Activated naive CD4-positive, alpha-beta T cell treated with anti-CD3 and anti-CD28 coated beads, Interleukin-2, amount 10 ng/mL, durations not matched to agents 7 days and 5 days (primary cell): ENCODE measurements at regions of chr5 and their contacts with region 1.

Region 1: GRCh38 chr5:140145818-140146522 is 20.2 kb downstream of the IGIP start:
- DNase-seq: peak; percentile 63
- H3K4me3 Mint-ChIP-seq: no peak overlapping the region
- H3K27ac Mint-ChIP-seq: no peak overlapping the region
- H3K4me1 Mint-ChIP-seq: peaks cover 15% of the 10 kb centered on the region
- H3K27me3 Mint-ChIP-seq: peaks cover 71% of the 10 kb centered on the region

Region 2: DNA sequence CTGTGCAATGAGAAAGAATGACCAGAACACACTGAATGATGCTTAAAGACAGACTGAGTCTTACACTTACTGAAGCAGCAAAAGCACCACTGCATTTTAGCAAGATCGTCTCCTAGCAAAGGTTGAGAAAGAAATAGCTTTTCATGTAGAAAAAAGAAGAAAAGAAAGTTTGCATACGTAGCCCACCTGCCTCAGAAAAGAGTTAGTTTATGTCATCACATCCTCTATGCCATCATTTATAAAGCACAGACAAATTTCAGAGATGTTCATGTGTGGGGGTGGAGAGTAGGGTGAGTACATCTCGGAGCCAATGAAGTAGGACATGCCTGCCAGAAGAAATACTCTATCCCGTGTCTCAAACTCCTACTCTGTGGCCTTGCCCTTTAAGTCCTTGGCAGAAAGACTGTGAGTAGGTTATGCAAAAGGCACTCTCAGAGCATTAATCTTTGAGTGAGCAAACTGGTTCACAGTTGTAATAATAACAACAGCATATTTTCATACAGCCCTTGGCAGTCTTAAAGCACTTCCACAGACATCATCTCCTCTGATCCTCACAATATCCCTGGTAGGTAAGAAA is 125.3 kb before region 1 on chr5:
- CTCF ChIA-PET with region 1: no interaction called
- DNase-seq: no peak
- H3K4me3 Mint-ChIP-seq: no peak overlapping the region
- H3K27ac Mint-ChIP-seq: no peak overlapping the region
- H3K4me1 Mint-ChIP-seq: no peaks in the 10 kb centered on the region
- H3K27me3 Mint-ChIP-seq: peaks cover 22% of the 10 kb centered on the region

Region 3: DNA sequence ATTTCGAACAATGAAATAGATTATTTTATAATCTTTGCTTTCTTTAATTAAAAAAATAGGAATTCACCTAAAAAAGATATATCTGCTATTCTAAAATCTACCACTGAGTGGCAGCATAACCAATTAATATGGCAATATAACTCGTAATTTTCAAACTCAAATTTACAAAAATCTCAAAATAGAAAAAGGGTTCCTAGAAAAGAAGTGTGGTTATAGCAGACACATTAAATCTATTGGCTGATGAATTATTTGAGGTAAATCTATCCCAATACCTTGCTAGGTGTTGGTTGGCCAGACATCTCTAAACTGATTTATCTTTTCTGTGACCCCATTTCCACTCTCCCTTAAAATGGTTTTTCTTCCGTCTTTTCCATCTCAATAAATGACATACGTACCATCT is 72.7 kb before region 1 on chr5:
- CTCF ChIA-PET with region 1: interaction called, 120 read pairs
- DNase-seq: no peak
- H3K4me3 Mint-ChIP-seq: no peak overlapping the region
- H3K27ac Mint-ChIP-seq: no peak overlapping the region
- H3K4me1 Mint-ChIP-seq: no peaks in the 10 kb centered on the region
- H3K27me3 Mint-ChIP-seq: peaks cover 33% of the 10 kb centered on the region

Region 4: DNA sequence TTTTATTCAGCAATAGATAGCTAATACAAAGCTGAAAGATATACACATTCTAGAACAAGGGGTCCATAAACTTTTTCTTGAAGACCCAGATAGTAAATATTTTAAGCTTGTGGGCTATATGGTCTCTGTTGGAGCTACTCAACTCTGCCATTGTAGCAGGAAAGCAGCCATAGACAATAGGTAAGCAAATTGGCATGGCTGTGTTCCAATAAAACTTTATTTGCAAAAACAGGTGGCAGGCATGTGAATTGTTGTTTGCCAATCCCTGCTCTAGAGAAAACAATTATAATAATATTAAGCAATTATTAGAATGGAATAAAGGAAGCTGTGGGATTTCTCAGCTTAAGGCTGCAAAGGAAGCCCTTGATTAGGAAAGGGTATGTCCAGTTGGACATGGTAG is 64.9 kb before region 1 on chr5:
- CTCF ChIA-PET with region 1: interaction called, 120 read pairs
- DNase-seq: no peak
- H3K4me3 Mint-ChIP-seq: no peak overlapping the region
- H3K27ac Mint-ChIP-seq: no peak overlapping the region
- H3K4me1 Mint-ChIP-seq: no peaks in the 10 kb centered on the region
- H3K27me3 Mint-ChIP-seq: peaks cover 43% of the 10 kb centered on the region

Region 5: DNA sequence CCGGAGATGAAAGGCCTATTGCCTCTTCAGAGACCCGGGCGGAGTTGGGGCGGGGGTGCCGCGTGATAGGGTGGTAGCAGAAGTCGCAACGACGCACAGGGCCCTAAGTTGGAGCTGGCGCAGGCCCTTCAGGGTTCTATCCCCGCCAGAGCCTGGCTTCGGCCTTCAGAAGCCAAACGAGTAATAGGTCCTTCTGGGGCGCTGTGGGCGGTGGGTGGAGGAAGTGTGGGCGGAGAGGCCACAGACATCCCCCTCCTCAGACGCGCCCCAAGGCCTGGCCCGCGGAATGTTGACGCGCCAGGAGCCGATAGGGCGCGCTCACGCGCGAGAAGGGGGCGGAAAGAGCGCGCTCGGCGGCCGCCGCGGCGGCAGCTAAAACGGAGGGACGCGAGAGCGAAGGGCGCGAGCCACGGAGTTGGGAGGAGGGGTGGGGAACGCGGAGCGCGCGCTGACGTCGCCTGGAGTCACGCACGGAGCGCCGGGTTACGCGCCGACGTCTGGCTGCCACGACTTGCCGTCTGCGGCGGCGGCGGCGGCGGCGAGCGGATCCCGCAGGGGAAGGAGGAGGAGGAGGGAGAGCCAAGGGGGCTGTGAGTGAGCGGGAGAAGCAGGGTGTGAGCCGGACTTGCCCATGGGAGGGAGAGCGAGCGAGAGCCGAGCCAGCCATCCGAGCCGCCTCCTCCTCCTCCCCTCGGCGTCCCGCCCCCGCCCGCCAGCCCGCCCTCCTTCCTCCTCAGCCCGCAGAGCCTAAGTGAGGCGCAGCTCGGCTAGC is 38.5 kb before region 1 on chr5:
- CTCF ChIA-PET with region 1: interaction called, 62 read pairs
- DNase-seq: peak; percentile 96
- H3K4me3 Mint-ChIP-seq: peak overlapping the region; percentile 97
- H3K27ac Mint-ChIP-seq: peak overlapping the region; percentile 98
- H3K4me1 Mint-ChIP-seq: peaks cover 46% of the 10 kb centered on the region
- H3K27me3 Mint-ChIP-seq: peaks cover 42% of the 10 kb centered on the region

Region 6: GRCh38 chr5:140113699-140114263 is 32.2 kb before region 1 on chr5 and contains the start of gene PURA:
- CTCF ChIA-PET with region 1: interaction called, 62 read pairs
- DNase-seq: peak; percentile 99
- H3K4me3 Mint-ChIP-seq: peak within 1 kb of the TSS; percentile 95
- H3K27ac Mint-ChIP-seq: peak within 1 kb of the TSS; percentile 98
- H3K4me1 Mint-ChIP-seq: peaks cover 74% of the 10 kb centered on the region
- H3K27me3 Mint-ChIP-seq: peaks cover 39% of the 10 kb centered on the region

Region 7: DNA sequence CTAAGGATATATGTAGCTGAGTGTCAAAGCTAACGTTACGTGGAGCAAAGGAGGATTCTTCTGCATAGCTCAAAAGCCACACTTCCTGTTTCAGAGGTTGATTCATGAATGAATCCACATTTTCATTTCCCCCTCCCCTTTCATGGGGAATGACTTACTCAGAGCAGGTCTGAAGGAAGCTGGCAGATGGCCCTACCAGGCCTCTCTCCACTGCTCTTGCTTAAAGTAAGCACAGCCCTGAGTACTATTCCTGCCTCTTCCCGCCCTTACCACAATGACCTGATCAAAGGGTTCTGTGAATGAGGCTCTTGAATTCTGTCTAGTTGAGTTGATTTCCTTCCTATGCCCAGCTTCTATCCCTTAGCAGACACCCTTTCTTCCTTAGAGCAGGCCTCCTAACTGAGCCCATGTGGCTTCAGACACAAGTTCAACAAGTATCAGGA is 14.0 kb before region 1 on chr5:
- CTCF ChIA-PET with region 1: interaction called, 29 read pairs
- DNase-seq: no peak
- H3K4me3 Mint-ChIP-seq: no peak overlapping the region
- H3K27ac Mint-ChIP-seq: peak overlapping the region; percentile 53
- H3K4me1 Mint-ChIP-seq: peaks cover 41% of the 10 kb centered on the region
- H3K27me3 Mint-ChIP-seq: peaks cover 6% of the 10 kb centered on the region

Region 8: GRCh38 chr5:140157032-140157803 is 11.2 kb after region 1 on chr5:
- CTCF ChIA-PET with region 1: interaction called, 27 read pairs
- DNase-seq: peak; percentile 90
- H3K4me3 Mint-ChIP-seq: no peak overlapping the region
- H3K27ac Mint-ChIP-seq: no peak overlapping the region
- H3K4me1 Mint-ChIP-seq: peaks cover 10% of the 10 kb centered on the region
- H3K27me3 Mint-ChIP-seq: peaks cover 7% of the 10 kb centered on the region

Region 9: DNA sequence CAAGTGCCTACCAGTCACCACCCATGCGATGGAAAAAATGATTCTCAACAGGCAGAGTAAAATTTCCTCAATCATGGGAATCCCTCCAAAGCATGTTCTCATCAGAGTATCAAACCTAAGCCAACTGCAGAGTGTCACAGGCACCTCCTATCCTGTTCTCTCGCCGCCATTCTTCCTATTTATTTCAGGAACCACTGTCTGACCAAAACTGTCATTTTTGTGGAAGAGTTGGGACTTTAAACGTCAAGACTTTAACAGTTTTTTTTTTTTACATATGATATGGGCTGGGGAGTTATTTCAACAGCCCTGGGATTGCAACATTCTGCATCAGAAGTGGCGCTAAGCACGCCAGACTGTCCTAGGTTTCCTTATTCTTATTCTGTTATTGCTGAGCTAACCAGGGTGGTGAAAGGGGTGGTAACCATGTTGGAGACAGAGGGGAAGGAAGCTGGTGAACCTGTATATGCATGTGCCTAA is 127.5 kb after region 1 on chr5:
- CTCF ChIA-PET with region 1: no interaction called
- DNase-seq: no peak
- H3K4me3 Mint-ChIP-seq: no peak overlapping the region
- H3K27ac Mint-ChIP-seq: peak overlapping the region; percentile 68
- H3K4me1 Mint-ChIP-seq: peaks cover 30% of the 10 kb centered on the region
- H3K27me3 Mint-ChIP-seq: no peaks in the 10 kb centered on the region